Activated CD4-positive, alpha-beta T cell treated with anti-CD3 and anti-CD28 coated beads for 36 hours (primary cell): ENCODE measurements at regions of chr19 and their contacts with region 1.

Region 1: GRCh38 chr19:18932216-18932841 is 8.7 kb downstream of the HOMER3 start:
- DNase-seq: peak; percentile 95
- ATAC-seq: peak; percentile 98
- H3K4me3 Mint-ChIP-seq: peak overlapping the region; percentile 53
- H3K27ac Mint-ChIP-seq: no peak overlapping the region
- H3K4me1 Mint-ChIP-seq: peaks cover 6% of the 10 kb centered on the region
- H3K27me3 Mint-ChIP-seq: peaks cover 1% of the 10 kb centered on the region

Region 2: GRCh38 chr19:18879579-18880373 is 52.6 kb before region 1 on chr19:
- CTCF ChIA-PET with region 1: no interaction called
- POLR2A ChIA-PET with region 1: no interaction called
- intact Hi-C with region 1: loop called in 1 of 2 experiments (anchors 1 kb)
- DNase-seq: peak; percentile 63
- ATAC-seq: peak; percentile 77
- H3K4me3 Mint-ChIP-seq: no peak overlapping the region
- H3K27ac Mint-ChIP-seq: no peak overlapping the region
- H3K4me1 Mint-ChIP-seq: no peaks in the 10 kb centered on the region
- H3K27me3 Mint-ChIP-seq: no peaks in the 10 kb centered on the region

Region 3: GRCh38 chr19:19366612-19367396 is 434.5 kb after region 1 on chr19:
- CTCF ChIA-PET with region 1: no interaction called
- POLR2A ChIA-PET with region 1: no interaction called
- intact Hi-C with region 1: no loop called
- DNase-seq: peak; percentile 86
- ATAC-seq: peak; percentile 84
- H3K4me3 Mint-ChIP-seq: no peak overlapping the region
- H3K27ac Mint-ChIP-seq: peak overlapping the region; percentile 38
- H3K4me1 Mint-ChIP-seq: peaks cover 17% of the 10 kb centered on the region
- H3K27me3 Mint-ChIP-seq: no peaks in the 10 kb centered on the region